Right cardiac atrium (tissue), 5 donors: ENCODE measurements at regions of chr12 and their contacts with region 1.

Region 1: GRCh38 chr12:42237052-42237852 is 796 bp downstream of the YAF2 start:
- DNase-seq: peak; percentile 78 to 89 (median 88)
- ATAC-seq: peak; percentile 71 to 85
- H3K4me3 ChIP-seq: peak overlapping the region; percentile 97
- H3K27ac ChIP-seq: peak overlapping the region; percentile 97
- H3K4me1 ChIP-seq: peaks cover 4% of the 10 kb centered on the region
- H3K27me3 ChIP-seq: no peaks in the 10 kb centered on the region

Region 2: DNA sequence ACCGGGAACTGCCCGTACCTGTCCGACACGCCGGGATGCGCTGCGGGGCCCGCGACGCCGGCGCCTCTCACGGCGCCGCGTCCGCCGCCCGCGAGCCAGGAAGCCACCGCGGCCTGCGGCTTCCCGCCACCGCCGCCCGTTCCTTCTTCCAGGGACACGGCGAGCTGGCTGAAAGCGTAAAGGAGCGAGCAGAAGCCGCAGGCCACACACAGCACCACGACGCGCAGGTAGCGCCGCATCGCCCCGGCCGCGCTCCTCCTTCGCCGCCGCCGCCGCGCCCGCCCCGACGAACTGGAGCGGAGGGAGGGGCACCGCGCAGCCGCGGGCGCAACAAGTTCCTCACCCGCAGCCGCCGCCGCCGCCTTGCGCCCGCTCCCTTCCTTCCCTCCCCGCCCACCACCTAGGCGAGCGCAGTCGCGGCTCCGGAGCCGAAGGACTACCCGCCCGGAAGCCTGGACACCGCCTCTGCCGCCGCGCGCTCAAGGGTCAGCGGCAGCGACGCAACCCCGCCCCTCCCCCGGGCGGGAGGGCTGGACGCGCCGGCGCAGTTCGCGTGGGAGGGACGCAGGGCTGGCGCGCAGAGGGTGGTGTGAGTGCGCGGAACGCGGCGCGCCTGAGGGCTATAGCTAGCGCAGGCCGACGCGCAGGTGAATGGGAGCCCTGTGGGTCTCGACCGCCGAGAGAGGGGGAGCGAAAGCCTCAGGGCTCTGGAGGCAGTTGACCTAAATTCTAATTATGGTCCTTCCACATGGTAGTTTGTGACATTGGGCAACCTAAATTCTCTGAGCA is 92.7 kb before region 1 on chr12 and contains the start of gene GXYLT1:
- intact Hi-C with region 1: loop called in 2 of 4 experiments (anchors 5 to 10 kb)
- DNase-seq: peak; percentile 95 to 98 (median 98)
- ATAC-seq: peak; percentile 99
- H3K4me3 ChIP-seq: peak within 1 kb of the TSS; percentile 79
- H3K27ac ChIP-seq: peak within 1 kb of the TSS; percentile 39
- H3K4me1 ChIP-seq: no peaks in the 10 kb centered on the region
- H3K27me3 ChIP-seq: no peaks in the 10 kb centered on the region
- total RNA-seq, gene GXYLT1: 5.7 to 8.2 (median 6.2) TPM

Region 3: GRCh38 chr12:42325653-42326474 is 88.6 kb after region 1 on chr12 and contains the starts of genes PPHLN1 and ZCRB1:
- intact Hi-C with region 1: loop called in 2 of 4 experiments (anchors 10 kb)
- DNase-seq: peak; percentile 86 to 93 (median 91)
- ATAC-seq: peak; percentile 99
- H3K4me3 ChIP-seq: peak within 1 kb of the TSS; percentile 89
- H3K27ac ChIP-seq: peak within 1 kb of the TSS; percentile 91
- H3K4me1 ChIP-seq: peaks cover 4% of the 10 kb centered on the region
- H3K27me3 ChIP-seq: no peaks in the 10 kb centered on the region
- total RNA-seq, gene PPHLN1: 39.2 to 48.8 (median 43.3) TPM
- total RNA-seq, gene ZCRB1: 52.3 to 59.6 (median 56.9) TPM

Region 4: DNA sequence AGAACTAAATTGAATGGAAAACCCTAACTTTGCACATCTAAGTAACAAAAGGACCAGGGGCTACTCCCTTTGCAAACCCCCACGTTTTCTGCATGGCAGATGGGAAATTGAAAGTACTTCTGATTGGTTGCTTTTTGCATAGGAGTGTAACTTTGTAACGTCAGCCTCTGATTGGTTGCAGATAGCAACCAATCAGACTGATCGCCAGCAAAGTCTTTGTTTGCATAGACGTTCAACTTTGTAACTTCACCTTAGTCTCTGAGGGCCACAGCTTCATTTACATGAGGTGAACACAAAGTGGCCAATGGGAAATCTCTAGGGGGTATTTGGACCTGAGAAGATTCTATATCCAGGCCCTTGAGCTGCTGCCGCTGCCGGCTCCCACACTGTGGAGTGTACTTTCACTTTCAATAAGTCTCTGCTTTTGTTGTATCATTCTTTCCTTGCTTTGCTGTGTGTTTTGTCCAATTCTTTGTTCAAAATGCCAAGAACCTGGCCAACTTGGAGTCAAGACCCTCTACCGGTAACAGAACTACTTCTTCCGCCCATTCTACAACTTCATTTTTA is 454.8 kb after region 1 on chr12:
- intact Hi-C with region 1: no loop called
- DNase-seq: peak in 1 of 3 donors; percentile 48
- ATAC-seq: peak in 1 of 2 donors; percentile 53
- H3K4me3 ChIP-seq: peak overlapping the region; percentile 48
- H3K27ac ChIP-seq: peak overlapping the region; percentile 37
- H3K4me1 ChIP-seq: peaks cover 3% of the 10 kb centered on the region
- H3K27me3 ChIP-seq: no peaks in the 10 kb centered on the region